A673 (cell line): ENCODE measurements at regions of chr2 and their contacts with region 1.

Region 1: DNA sequence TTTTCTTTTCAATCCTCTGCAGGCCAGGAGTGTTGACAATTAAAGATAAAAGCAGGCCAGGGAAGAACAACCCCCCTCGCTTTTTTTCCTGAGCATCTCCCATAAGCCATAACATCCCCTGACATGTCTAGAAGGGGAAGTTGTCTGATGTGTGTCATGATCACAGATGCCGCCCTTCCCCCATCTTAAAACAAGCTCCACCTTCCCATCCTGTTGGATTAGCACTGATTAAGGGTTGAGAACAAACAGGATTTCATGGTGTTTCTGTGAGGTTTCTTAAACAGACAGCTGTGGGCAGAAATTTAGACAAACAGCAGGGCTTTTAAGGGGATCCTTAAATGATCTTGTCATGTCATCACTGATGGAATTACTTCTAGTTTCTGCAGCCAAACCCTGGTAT is 59.4 kb upstream of the UPP2 start:
- DNase-seq: peak; percentile 90
- H3K4me3 ChIP-seq: no peak overlapping the region
- H3K27ac ChIP-seq: peak overlapping the region; percentile 85
- H3K4me1 ChIP-seq: peaks cover 81% of the 10 kb centered on the region
- H3K27me3 ChIP-seq: no peaks in the 10 kb centered on the region
- CTCF ChIP-seq: no peak

Region 2: DNA sequence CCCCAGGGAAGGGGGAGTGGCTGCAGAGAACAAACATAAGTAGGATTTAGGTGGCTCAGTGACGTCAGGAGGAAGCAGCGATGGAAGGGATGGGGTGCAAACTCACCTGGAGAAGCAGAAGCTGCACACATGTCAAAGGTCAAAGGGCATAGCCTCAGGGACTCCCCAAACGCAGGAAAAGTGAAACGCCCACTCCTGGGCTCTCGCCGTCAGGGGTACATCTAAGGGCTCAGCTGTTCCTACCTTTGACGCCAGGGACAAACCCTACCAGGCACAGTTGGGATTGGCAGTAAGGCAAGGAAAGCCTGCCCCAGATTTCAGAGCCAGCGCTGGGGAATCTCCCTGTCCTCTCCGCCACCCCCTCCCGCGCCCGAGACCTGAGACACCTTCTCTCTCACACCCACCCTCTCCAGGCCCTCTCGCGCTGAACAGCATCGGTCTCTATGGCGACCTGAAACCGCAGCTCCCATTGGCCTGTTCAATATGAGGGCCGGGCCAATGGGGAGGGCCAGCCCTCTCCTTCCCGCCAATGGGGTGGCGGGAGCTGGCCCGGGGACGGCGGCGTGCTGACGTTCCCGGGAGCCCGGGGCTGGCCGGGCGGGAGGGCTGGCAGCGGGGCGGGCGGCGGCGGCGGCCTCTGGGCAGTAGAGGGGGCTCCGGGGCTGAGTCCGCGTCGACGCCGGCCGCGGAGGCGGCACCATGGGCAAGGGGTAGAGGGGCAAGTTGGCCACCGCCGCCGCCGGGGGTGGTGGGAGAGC is 414.2 kb after region 1 on chr2 and contains the starts of genes CCDC148 and PKP4:
- CTCF ChIA-PET with region 1: interaction called, 3 read pairs
- POLR2A ChIA-PET with region 1: no interaction called
- intact Hi-C with region 1: loop called (anchors 5 kb)
- DNase-seq: peak; percentile 97
- H3K4me3 ChIP-seq: peak within 1 kb of the TSS; percentile 96
- H3K27ac ChIP-seq: peak within 1 kb of the TSS; percentile 78
- H3K4me1 ChIP-seq: peaks cover 30% of the 10 kb centered on the region
- H3K27me3 ChIP-seq: no peaks in the 10 kb centered on the region
- CTCF ChIP-seq: no peak
- total RNA-seq, gene CCDC148: 0.90 and 0.92 TPM in 2 replicates
- total RNA-seq, gene PKP4: 67.7 and 79.3 TPM in 2 replicates

Region 3: GRCh38 chr2:158740127-158740526 is 697.9 kb after region 1 on chr2:
- CTCF ChIA-PET with region 1: no interaction called
- POLR2A ChIA-PET with region 1: interaction called, 14 read pairs
- intact Hi-C with region 1: no loop called
- DNase-seq: no peak
- H3K4me3 ChIP-seq: no peak overlapping the region
- H3K27ac ChIP-seq: no peak overlapping the region
- H3K4me1 ChIP-seq: no peaks in the 10 kb centered on the region
- H3K27me3 ChIP-seq: no peaks in the 10 kb centered on the region
- CTCF ChIP-seq: no peak